CD8-positive, alpha-beta memory T cell (primary cell): ENCODE measurements at regions of chr12 and their contacts with region 1.

Region 1: GRCh38 chr12:96434107-96434506 is 33.9 kb upstream of the CDK17 start:
- DNase-seq: peak; percentile 64 to 89 (median 87)
- H3K4me3 ChIP-seq: no peak overlapping the region
- H3K4me3 Mint-ChIP-seq: peak overlapping the region; percentile 4 to 59 (median 49)
- H3K27ac ChIP-seq: peak overlapping the region; percentile 44
- H3K27ac Mint-ChIP-seq: peak overlapping the region; percentile 39 to 93 (median 84)
- H3K4me1 ChIP-seq: peaks cover 20% of the 10 kb centered on the region
- H3K4me1 Mint-ChIP-seq: peaks cover 20 to 34% (median 31%) of the 10 kb centered on the region in 3 donors
- H3K27me3 ChIP-seq: no peaks in the 10 kb centered on the region
- H3K27me3 Mint-ChIP-seq: no peaks in the 10 kb centered on the region

Region 2: GRCh38 chr12:96452256-96452922 is 18.3 kb after region 1 on chr12:
- CTCF ChIA-PET with region 1: interaction called, 4 read pairs
- POLR2A ChIA-PET with region 1: interaction called, 15 read pairs
- DNase-seq: no peak
- H3K4me3 ChIP-seq: no peak overlapping the region
- H3K4me3 Mint-ChIP-seq: no peak overlapping the region
- H3K27ac ChIP-seq: no peak overlapping the region
- H3K27ac Mint-ChIP-seq: peak overlapping the region in 6 of 8 donors; percentile 24 to 79 (median 56)
- H3K4me1 ChIP-seq: no peaks in the 10 kb centered on the region
- H3K4me1 Mint-ChIP-seq: peaks cover 3 to 5% (median 4%) of the 10 kb centered on the region in 3 donors
- H3K27me3 ChIP-seq: no peaks in the 10 kb centered on the region
- H3K27me3 Mint-ChIP-seq: no peaks in the 10 kb centered on the region